ENCODE measurements at regions of chr17 and their contacts with region 1.

Region 1: GRCh38 chr17:36629252-36629847 is 28.0 kb downstream of the MRM1 start:
- DNase-seq: peak; percentile 64 to 88 (median 80)
- ATAC-seq: peak; percentile 89
- H3K4me3 ChIP-seq: no peak overlapping the region
- H3K4me3 Mint-ChIP-seq: no peak overlapping the region
- H3K27ac ChIP-seq: no peak overlapping the region
- H3K27ac Mint-ChIP-seq: no peak overlapping the region
- H3K4me1 ChIP-seq: no peaks in the 10 kb centered on the region
- H3K4me1 Mint-ChIP-seq: no peaks in the 10 kb centered on the region
- H3K27me3 ChIP-seq: no peaks in the 10 kb centered on the region
- H3K27me3 Mint-ChIP-seq: peaks cover 5% of the 10 kb centered on the region
- CTCF ChIP-seq: peak; percentile 98

Region 2: GRCh38 chr17:36614933-36615332 is 14.4 kb before region 1 on chr17:
- CTCF ChIA-PET with region 1: interaction called, 10 read pairs
- POLR2A ChIA-PET with region 1: no interaction called
- intact Hi-C with region 1: no loop called
- DNase-seq: no peak
- ATAC-seq: no peak
- H3K4me3 ChIP-seq: no peak overlapping the region
- H3K4me3 Mint-ChIP-seq: no peak overlapping the region
- H3K27ac ChIP-seq: no peak overlapping the region
- H3K27ac Mint-ChIP-seq: no peak overlapping the region
- H3K4me1 ChIP-seq: no peaks in the 10 kb centered on the region
- H3K4me1 Mint-ChIP-seq: no peaks in the 10 kb centered on the region
- H3K27me3 ChIP-seq: no peaks in the 10 kb centered on the region
- H3K27me3 Mint-ChIP-seq: no peaks in the 10 kb centered on the region
- CTCF ChIP-seq: no peak

Region 3: GRCh38 chr17:36755586-36755985 is 126.2 kb after region 1 on chr17:
- CTCF ChIA-PET with region 1: interaction called, 15 read pairs
- POLR2A ChIA-PET with region 1: no interaction called
- intact Hi-C with region 1: loop called in 1 of 2 experiments (anchors 1 kb)
- DNase-seq: peak in 7 of 9 experiments; percentile 8 to 55 (median 38)
- ATAC-seq: no peak
- H3K4me3 ChIP-seq: no peak overlapping the region
- H3K4me3 Mint-ChIP-seq: no peak overlapping the region
- H3K27ac ChIP-seq: no peak overlapping the region
- H3K27ac Mint-ChIP-seq: no peak overlapping the region
- H3K4me1 ChIP-seq: no peaks in the 10 kb centered on the region
- H3K4me1 Mint-ChIP-seq: no peaks in the 10 kb centered on the region
- H3K27me3 ChIP-seq: no peaks in the 10 kb centered on the region
- H3K27me3 Mint-ChIP-seq: peaks cover 4% of the 10 kb centered on the region
- CTCF ChIP-seq: peak; percentile 39

Region 4: DNA sequence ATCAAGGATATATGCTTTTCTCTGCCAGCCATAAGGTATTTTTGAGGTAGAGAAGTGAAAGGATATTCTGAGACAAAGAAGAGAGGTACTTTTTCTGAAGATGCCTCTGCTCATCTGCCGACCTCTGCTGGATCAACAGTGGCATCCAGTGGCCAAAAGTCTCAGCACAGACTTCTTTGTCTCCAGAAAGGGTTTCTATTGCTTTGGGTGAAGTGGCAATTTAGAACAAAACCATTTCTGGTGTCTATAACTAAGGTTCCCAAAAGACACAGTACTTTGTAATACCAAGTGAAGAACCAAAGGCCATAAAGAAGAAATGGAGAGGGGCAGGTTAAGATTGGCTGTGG is 591.2 kb after region 1 on chr17:
- CTCF ChIA-PET with region 1: interaction called, 6 read pairs
- POLR2A ChIA-PET with region 1: no interaction called
- intact Hi-C with region 1: loop called (anchors 5 kb)
- DNase-seq: peak in 5 of 9 experiments; percentile 8 to 51 (median 32)
- ATAC-seq: no peak
- H3K4me3 ChIP-seq: no peak overlapping the region
- H3K4me3 Mint-ChIP-seq: no peak overlapping the region
- H3K27ac ChIP-seq: no peak overlapping the region
- H3K27ac Mint-ChIP-seq: no peak overlapping the region
- H3K4me1 ChIP-seq: no peaks in the 10 kb centered on the region
- H3K4me1 Mint-ChIP-seq: no peaks in the 10 kb centered on the region
- H3K27me3 ChIP-seq: no peaks in the 10 kb centered on the region
- H3K27me3 Mint-ChIP-seq: no peaks in the 10 kb centered on the region
- CTCF ChIP-seq: no peak

Region 5: DNA sequence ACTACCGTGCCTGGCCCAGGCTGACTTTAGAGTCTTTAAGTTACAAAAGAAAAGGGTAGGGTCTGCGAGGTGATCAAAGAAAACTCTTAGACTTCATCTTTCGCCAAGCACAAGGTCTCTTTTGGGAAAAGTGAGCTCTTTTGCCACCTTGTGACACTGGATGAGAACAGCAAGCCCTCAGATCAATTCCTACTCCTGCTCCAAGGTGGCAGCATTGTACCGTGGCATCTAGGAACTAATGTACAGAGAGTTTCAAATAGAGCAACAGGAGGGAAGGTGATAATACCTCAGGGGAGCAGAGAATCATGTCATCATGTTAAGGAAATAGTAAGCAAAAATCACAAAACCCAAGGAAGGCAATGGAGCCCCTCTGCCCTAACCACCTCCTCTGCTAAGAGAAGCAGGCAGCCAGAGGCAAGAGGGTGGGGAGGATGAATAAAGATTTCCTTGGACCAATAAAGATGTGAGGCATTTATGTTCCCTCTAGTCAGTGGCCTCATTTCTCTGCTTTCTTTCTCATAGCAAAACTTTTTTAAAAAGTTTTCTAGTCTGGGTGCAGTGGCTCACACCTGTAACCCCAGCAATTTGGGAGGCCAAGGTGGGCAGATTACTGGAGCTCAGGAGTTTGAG is 744.3 kb after region 1 on chr17:
- CTCF ChIA-PET with region 1: no interaction called
- POLR2A ChIA-PET with region 1: no interaction called
- intact Hi-C with region 1: loop called in 1 of 2 experiments (anchors 2 kb)
- DNase-seq: peak; percentile 30 to 80 (median 58)
- ATAC-seq: peak; percentile 98
- H3K4me3 ChIP-seq: no peak overlapping the region
- H3K4me3 Mint-ChIP-seq: no peak overlapping the region
- H3K27ac ChIP-seq: no peak overlapping the region
- H3K27ac Mint-ChIP-seq: no peak overlapping the region
- H3K4me1 ChIP-seq: no peaks in the 10 kb centered on the region
- H3K4me1 Mint-ChIP-seq: peaks cover 3% of the 10 kb centered on the region
- H3K27me3 ChIP-seq: no peaks in the 10 kb centered on the region
- H3K27me3 Mint-ChIP-seq: no peaks in the 10 kb centered on the region
- CTCF ChIP-seq: peak; percentile 96

Region 6: DNA sequence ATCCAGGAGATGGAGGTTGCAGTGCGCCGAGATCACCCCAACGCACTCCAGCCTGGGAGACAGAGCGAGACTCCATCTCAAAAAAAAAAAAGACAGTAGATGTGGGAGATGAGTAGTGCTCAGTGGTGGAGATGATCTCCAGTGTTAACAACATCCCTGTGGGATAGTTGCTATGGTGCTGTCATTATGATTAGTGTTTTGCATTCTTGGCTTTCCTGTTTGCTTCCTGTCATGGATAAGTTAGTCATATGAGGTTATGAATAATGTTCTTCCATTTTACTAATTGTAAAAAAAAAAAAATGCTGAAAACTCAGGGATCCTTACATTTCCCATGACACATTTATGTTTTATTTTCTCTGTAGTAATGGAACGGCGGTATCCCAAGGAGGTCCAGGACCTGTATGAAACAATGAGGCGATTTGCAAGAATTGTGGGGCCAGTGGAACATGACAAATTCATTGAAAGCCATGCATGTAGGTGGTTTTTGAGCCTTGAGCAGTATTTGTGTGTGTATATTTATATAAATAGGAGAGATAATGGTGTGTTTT is 835.8 kb after region 1 on chr17:
- CTCF ChIA-PET with region 1: no interaction called
- POLR2A ChIA-PET with region 1: no interaction called
- intact Hi-C with region 1: no loop called
- DNase-seq: no peak
- ATAC-seq: no peak
- H3K4me3 ChIP-seq: no peak overlapping the region
- H3K4me3 Mint-ChIP-seq: no peak overlapping the region
- H3K27ac ChIP-seq: no peak overlapping the region
- H3K27ac Mint-ChIP-seq: no peak overlapping the region
- H3K4me1 ChIP-seq: no peaks in the 10 kb centered on the region
- H3K4me1 Mint-ChIP-seq: peaks cover 3% of the 10 kb centered on the region
- H3K27me3 ChIP-seq: no peaks in the 10 kb centered on the region
- H3K27me3 Mint-ChIP-seq: no peaks in the 10 kb centered on the region
- CTCF ChIP-seq: no peak

Measured in CD8-positive, alpha-beta T cell (primary cell).